ENCODE measurements at regions of chr18 and their contacts with region 1.

Region 1: GRCh38 chr18:12702221-12703095 is at the starts of genes CEP76 and PSMG2:
- DNase-seq: peak; percentile 94
- H3K4me3 ChIP-seq: peak within 1 kb of the TSS; percentile 53 to 90 (median 89)
- H3K27ac ChIP-seq: peak within 1 kb of the TSS; percentile 93
- H3K4me1 ChIP-seq: peaks cover 19% of the 10 kb centered on the region
- H3K27me3 ChIP-seq: no peaks in the 10 kb centered on the region
- CTCF ChIP-seq: no peak
- POLR2A ChIP-seq: peak; percentile 77
- total RNA-seq, gene CEP76: 8.6 and 8.8 TPM in 2 replicates
- total RNA-seq, gene PSMG2: 71.0 and 72.3 TPM in 2 replicates

Region 2: DNA sequence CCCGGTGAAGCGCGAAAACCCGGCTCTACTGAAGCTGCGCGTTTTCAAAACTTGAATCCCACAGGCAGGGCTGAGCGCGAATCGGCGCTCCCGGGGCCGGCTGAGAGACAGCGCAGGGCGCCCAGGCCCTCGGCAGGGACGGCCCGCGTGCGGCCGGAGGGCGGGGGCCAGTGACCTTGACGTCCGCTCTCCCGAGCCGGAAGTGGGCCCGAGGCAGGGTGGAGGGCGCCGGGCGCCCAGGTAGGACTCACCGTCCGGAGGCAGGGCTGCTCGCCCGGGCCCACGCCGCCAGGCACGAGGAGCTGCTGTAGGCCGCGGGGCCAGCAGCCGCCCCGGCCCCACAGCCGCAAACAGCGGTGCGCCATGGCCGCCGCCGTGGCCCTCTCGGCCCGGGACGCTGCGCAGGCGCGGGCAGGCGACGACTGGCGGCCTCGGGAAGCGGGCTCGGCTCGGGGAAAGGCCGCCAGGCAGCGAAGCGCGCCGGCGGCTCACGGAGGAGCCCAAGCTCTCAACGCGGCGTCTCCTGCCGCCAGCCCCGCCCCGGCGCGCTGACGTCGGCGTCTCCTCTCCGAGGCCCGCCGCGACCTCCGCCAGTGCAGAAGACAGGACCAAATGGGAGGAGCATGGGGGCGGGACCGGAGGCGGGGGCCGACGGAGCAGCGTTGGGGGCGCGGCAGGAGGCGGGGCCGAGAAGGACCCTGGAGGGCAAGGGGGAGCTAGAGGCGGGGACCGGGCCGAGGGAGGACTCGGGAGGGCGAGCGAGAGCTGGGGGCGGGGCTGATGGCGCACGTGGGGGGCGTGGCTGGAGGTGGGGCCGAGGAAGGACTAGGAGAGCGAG is 325.5 kb before region 1 on chr18 and contains the start of gene AFG3L2:
- CTCF ChIA-PET with region 1: no interaction called
- POLR2A ChIA-PET with region 1: no interaction called
- dilution Hi-C with region 1: no loop called
- intact Hi-C with region 1: loop called (anchors 1 kb)
- DNase-seq: peak; percentile 100
- H3K4me3 ChIP-seq: peak within 1 kb of the TSS; percentile 62 to 85 (median 72)
- H3K27ac ChIP-seq: peak within 1 kb of the TSS; percentile 89
- H3K4me1 ChIP-seq: peaks cover 9% of the 10 kb centered on the region
- H3K27me3 ChIP-seq: no peaks in the 10 kb centered on the region
- CTCF ChIP-seq: no peak
- POLR2A ChIP-seq: peak; percentile 93
- total RNA-seq, gene AFG3L2: 40.6 and 42.4 TPM in 2 replicates